GM12878 (cell line): ENCODE measurements at regions of chr3 and their contacts with region 1.

Region 1: DNA sequence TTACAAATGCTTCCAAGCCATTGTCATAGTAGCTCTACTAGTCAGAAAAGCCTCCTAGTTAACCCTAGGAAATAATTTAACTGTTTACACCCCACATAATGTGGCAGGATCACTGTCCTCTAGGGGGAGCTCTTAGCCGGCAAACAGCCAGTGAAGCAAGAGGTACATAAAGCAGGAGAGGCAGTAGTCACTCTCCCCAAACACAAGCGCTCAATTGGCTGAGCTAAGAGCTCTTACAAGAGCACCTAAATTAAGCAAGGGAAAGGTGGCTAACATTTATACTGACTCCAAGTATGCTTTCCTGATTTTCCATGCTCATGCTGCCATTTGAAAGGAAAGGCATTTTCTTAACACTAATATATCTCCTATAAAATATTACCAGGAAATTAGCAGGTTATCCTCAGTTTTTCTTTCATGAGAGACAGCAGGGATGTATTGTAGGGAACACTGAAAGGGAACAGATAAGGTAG is 37.6 kb downstream of the NCEH1 start:
- DNase-seq: no peak
- ATAC-seq: peak; percentile 97
- H3K4me3 ChIP-seq: no peak overlapping the region
- H3K27ac ChIP-seq: no peak overlapping the region
- H3K4me1 ChIP-seq: no peaks in the 10 kb centered on the region
- H3K27me3 ChIP-seq: no peaks in the 10 kb centered on the region
- CTCF ChIP-seq: peak; percentile 64 to 76 (median 67)
- EP300 ChIP-seq: no peak
- POLR2A ChIP-seq: no peak
- RAD21 ChIP-seq: peak; percentile 65

Region 2: GRCh38 chr3:172094621-172095557 is 578.4 kb before region 1 on chr3:
- CTCF ChIA-PET with region 1: no interaction called
- POLR2A ChIA-PET with region 1: no interaction called
- RAD21 ChIA-PET with region 1: no interaction called
- SMC1A ChIA-PET with region 1: no interaction called
- in situ Hi-C with region 1: no loop called
- intact Hi-C with region 1: no loop called
- DNase-seq: peak; percentile 62
- ATAC-seq: peak; percentile 96
- H3K4me3 ChIP-seq: no peak overlapping the region
- H3K27ac ChIP-seq: peak overlapping the region; percentile 54
- H3K4me1 ChIP-seq: peaks cover 35% of the 10 kb centered on the region
- H3K27me3 ChIP-seq: no peaks in the 10 kb centered on the region
- CTCF ChIP-seq: peak; percentile 8 to 31 (median 29); a peak in 4 of 6 replicates
- EP300 ChIP-seq: no peak; a peak in 1 of 4 replicates
- POLR2A ChIP-seq: no peak
- RAD21 ChIP-seq: peak; percentile 44

Region 3: GRCh38 chr3:172461530-172462138 is 211.6 kb before region 1 on chr3:
- CTCF ChIA-PET with region 1: interaction called, 11 read pairs
- POLR2A ChIA-PET with region 1: no interaction called
- RAD21 ChIA-PET with region 1: interaction called, 4 read pairs
- SMC1A ChIA-PET with region 1: interaction called, 3 read pairs
- in situ Hi-C with region 1: no loop called
- intact Hi-C with region 1: no loop called
- DNase-seq: no peak
- ATAC-seq: peak; percentile 84
- H3K4me3 ChIP-seq: no peak overlapping the region
- H3K27ac ChIP-seq: no peak overlapping the region
- H3K4me1 ChIP-seq: no peaks in the 10 kb centered on the region
- H3K27me3 ChIP-seq: no peaks in the 10 kb centered on the region; a peak in 2 of 4 replicates
- CTCF ChIP-seq: peak; percentile 68 to 93 (median 91)
- EP300 ChIP-seq: no peak
- POLR2A ChIP-seq: no peak
- RAD21 ChIP-seq: peak; percentile 59

Region 4: DNA sequence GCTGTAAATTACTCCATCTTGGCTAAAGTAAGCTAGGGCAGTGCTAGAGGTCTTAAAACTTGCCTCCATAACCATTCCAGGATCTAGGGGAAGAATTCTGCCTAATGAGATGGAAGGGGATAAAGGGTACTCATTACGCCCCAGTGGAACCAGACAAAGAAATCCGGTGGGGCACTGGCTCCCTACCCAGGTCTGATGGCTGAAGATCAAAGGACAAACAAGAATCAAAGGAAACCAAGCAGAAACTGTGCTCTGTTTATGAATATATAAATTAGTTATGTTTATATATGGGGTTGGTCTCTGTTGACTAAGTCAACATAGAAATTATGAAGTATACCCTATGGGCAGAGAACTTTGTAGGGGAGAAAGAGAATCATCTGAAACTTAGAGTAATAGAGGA is 20.2 kb before region 1 on chr3:
- CTCF ChIA-PET with region 1: interaction called, 18 read pairs
- POLR2A ChIA-PET with region 1: no interaction called
- RAD21 ChIA-PET with region 1: interaction called, 3 read pairs
- SMC1A ChIA-PET with region 1: interaction called, 3 read pairs
- in situ Hi-C with region 1: no loop called
- intact Hi-C with region 1: no loop called
- DNase-seq: no peak
- ATAC-seq: no peak
- H3K4me3 ChIP-seq: no peak overlapping the region
- H3K27ac ChIP-seq: no peak overlapping the region
- H3K4me1 ChIP-seq: no peaks in the 10 kb centered on the region
- H3K27me3 ChIP-seq: no peaks in the 10 kb centered on the region
- CTCF ChIP-seq: no peak
- EP300 ChIP-seq: no peak
- POLR2A ChIP-seq: no peak
- RAD21 ChIP-seq: no peak

Region 5: DNA sequence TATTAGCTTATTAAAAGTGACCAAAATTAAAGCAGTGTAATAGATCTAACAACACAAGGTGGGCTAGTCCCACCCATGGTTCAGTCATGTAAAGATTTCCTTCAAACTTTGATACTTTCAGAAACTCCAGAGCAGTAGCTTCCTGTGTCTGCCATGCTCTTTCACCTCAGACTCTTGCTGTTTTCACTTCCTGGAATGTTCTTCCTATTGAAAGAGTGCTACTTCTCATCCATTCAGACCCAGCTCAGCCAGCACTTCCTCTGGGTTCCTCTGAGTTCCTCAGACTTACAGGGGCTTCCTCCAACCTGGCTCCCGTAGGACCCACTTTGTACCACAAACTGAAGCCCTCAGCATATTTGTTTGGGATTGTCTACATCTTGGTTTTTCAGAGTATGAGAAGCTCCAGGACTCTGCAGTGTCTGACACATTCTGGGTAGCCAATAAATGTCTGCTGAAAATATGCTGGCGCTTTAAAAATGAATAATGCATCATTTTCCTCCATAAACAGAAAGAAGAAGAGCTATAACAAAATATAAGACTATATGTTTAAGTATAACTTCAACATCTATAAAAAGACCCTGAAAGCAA is 19.6 kb after region 1 on chr3:
- CTCF ChIA-PET with region 1: interaction called, 30 read pairs
- POLR2A ChIA-PET with region 1: no interaction called
- RAD21 ChIA-PET with region 1: interaction called, 7 read pairs
- SMC1A ChIA-PET with region 1: interaction called, 9 read pairs
- in situ Hi-C with region 1: no loop called
- intact Hi-C with region 1: no loop called
- DNase-seq: no peak
- ATAC-seq: peak; percentile 76
- H3K4me3 ChIP-seq: no peak overlapping the region
- H3K27ac ChIP-seq: peak overlapping the region; percentile 13
- H3K4me1 ChIP-seq: peaks cover 17% of the 10 kb centered on the region
- H3K27me3 ChIP-seq: no peaks in the 10 kb centered on the region
- CTCF ChIP-seq: no peak
- EP300 ChIP-seq: no peak
- POLR2A ChIP-seq: no peak
- RAD21 ChIP-seq: no peak

Region 6: GRCh38 chr3:172710664-172711453 is 37.6 kb after region 1 on chr3 and contains the start of gene NCEH1:
- CTCF ChIA-PET with region 1: interaction called, 53 read pairs
- POLR2A ChIA-PET with region 1: interaction called, 4 read pairs
- RAD21 ChIA-PET with region 1: interaction called, 18 read pairs
- SMC1A ChIA-PET with region 1: interaction called, 13 read pairs
- in situ Hi-C with region 1: no loop called
- intact Hi-C with region 1: loop called (anchors 1 kb)
- DNase-seq: peak; percentile 86
- ATAC-seq: peak; percentile 99
- H3K4me3 ChIP-seq: peak within 1 kb of the TSS; percentile 67
- H3K27ac ChIP-seq: peak within 1 kb of the TSS; percentile 52
- H3K4me1 ChIP-seq: no peaks in the 10 kb centered on the region; the same call in 1 of the 2 replicates
- H3K27me3 ChIP-seq: no peaks in the 10 kb centered on the region
- CTCF ChIP-seq: peak; percentile 82 to 96 (median 91); a peak in 5 of 6 replicates
- EP300 ChIP-seq: no peak
- POLR2A ChIP-seq: peak; percentile 84
- RAD21 ChIP-seq: peak; percentile 65
- polyA plus RNA-seq, gene NCEH1: 1.8 to 2.3 TPM

Region 7: DNA sequence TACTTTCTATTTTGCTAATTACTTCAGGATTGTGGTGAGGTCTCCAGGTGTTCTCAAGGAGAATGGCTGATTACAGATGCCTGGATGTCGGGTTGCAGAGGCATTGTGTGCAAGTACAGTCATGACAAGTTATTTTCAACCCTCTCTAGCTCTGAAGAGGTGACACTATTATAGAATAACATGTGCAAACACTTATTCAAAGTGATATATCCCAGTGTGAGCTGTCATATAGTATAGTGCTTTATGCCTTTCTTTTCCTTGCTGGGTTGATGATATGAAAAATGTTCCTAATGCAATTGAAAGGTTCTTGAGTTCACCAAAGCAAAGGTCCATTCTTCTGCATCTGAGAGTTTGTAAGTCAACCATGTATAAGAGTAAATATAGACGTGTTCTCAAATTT is 300.6 kb after region 1 on chr3:
- CTCF ChIA-PET with region 1: no interaction called
- POLR2A ChIA-PET with region 1: no interaction called
- RAD21 ChIA-PET with region 1: no interaction called
- SMC1A ChIA-PET with region 1: no interaction called
- in situ Hi-C with region 1: no loop called
- intact Hi-C with region 1: no loop called
- DNase-seq: no peak
- ATAC-seq: no peak
- H3K4me3 ChIP-seq: no peak overlapping the region
- H3K27ac ChIP-seq: no peak overlapping the region
- H3K4me1 ChIP-seq: no peaks in the 10 kb centered on the region
- H3K27me3 ChIP-seq: no peaks in the 10 kb centered on the region
- CTCF ChIP-seq: no peak
- EP300 ChIP-seq: no peak
- POLR2A ChIP-seq: no peak
- RAD21 ChIP-seq: no peak